A673 (cell line): ENCODE measurements at regions of chr5 and their contacts with region 1.

Region 1: GRCh38 chr5:78373231-78373630 is 12.8 kb downstream of the SCAMP1 start:
- DNase-seq: no peak
- H3K4me3 ChIP-seq: no peak overlapping the region
- H3K27ac ChIP-seq: no peak overlapping the region
- H3K4me1 ChIP-seq: no peaks in the 10 kb centered on the region
- H3K27me3 ChIP-seq: no peaks in the 10 kb centered on the region
- CTCF ChIP-seq: no peak

Region 2: DNA sequence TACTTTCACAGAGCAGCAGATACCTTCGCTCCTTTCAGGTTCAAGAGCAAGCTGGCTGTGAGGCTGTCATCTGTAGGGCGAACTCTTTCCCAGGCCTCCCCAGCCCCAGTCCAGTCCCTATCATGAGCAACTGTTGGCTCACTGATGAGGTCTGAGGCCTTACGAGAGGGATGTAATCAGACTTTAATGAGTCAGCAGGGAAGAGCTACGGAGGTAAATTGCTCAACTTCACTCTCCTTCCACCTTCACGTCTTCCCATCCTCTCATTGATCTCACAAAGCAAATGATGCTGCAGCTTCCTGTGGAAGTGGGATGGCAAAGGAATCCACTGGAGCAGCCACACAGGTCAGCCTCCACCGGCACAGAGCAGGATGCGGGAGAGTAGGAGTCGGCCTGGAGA is 466.4 kb before region 1 on chr5:
- CTCF ChIA-PET with region 1: no interaction called
- POLR2A ChIA-PET with region 1: no interaction called
- intact Hi-C with region 1: no loop called
- DNase-seq: no peak
- H3K4me3 ChIP-seq: no peak overlapping the region
- H3K27ac ChIP-seq: no peak overlapping the region
- H3K4me1 ChIP-seq: no peaks in the 10 kb centered on the region
- H3K27me3 ChIP-seq: peaks cover 43% of the 10 kb centered on the region
- CTCF ChIP-seq: no peak

Region 3: GRCh38 chr5:78706825-78707224 is 333.6 kb after region 1 on chr5:
- CTCF ChIA-PET with region 1: no interaction called
- POLR2A ChIA-PET with region 1: interaction called, 29 read pairs
- intact Hi-C with region 1: no loop called
- DNase-seq: no peak
- H3K4me3 ChIP-seq: no peak overlapping the region
- H3K27ac ChIP-seq: no peak overlapping the region
- H3K4me1 ChIP-seq: no peaks in the 10 kb centered on the region
- H3K27me3 ChIP-seq: no peaks in the 10 kb centered on the region
- CTCF ChIP-seq: no peak